SK-N-SH (cell line): ENCODE measurements at regions of chr12 and their contacts with region 1.

Region 1: DNA sequence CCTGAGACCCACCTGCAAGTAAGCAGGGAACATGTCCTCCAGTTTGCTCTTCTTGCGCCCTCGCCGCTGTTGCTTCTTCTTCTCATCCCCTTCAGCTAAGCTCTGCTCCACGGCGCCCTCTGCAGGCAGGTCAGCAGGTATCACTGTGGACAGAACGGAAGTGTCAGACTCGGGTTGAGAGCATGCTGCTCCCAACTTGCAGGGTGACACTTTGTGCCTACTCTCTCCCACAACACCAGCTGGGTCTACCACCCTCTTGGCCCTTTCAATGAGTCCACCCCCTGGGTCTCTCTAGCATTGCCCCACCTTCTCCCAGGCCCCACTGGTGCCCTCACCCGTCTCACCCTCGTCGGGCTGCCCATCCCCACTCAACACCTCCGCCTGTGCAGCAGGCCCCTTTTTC is 16.7 kb downstream of the KMT2D start:
- DNase-seq: peak; percentile 80
- H3K4me3 ChIP-seq: no peak overlapping the region
- H3K27ac ChIP-seq: no peak overlapping the region
- H3K4me1 ChIP-seq: no peaks in the 10 kb centered on the region
- H3K27me3 ChIP-seq: no peaks in the 10 kb centered on the region
- CTCF ChIP-seq: peak; percentile 67
- EP300 ChIP-seq: no peak
- RAD21 ChIP-seq: no peak

Region 2: GRCh38 chr12:49031553-49032162 is 12.2 kb before region 1 on chr12:
- CTCF ChIA-PET with region 1: interaction called, 18 read pairs
- POLR2A ChIA-PET with region 1: interaction called, 3 read pairs
- DNase-seq: no peak
- H3K4me3 ChIP-seq: no peak overlapping the region
- H3K27ac ChIP-seq: no peak overlapping the region; a peak in 1 of 4 replicates
- H3K4me1 ChIP-seq: no peaks in the 10 kb centered on the region
- H3K27me3 ChIP-seq: no peaks in the 10 kb centered on the region
- CTCF ChIP-seq: no peak
- EP300 ChIP-seq: no peak
- RAD21 ChIP-seq: no peak